ENCODE measurements at regions of chr3 and their contacts with region 1.

Region 1: GRCh38 chr3:112519424-112520001 is 20.2 kb upstream of the BTLA start:
- DNase-seq: peak in 1 of 2 donors; percentile 34
- H3K4me3 ChIP-seq: no peak overlapping the region
- H3K27ac ChIP-seq: no peak overlapping the region
- H3K4me1 ChIP-seq: no peaks in the 10 kb centered on the region
- H3K27me3 ChIP-seq: no peaks in the 10 kb centered on the region
- CTCF ChIP-seq: peak; percentile 61 to 86 (median 74)
- POLR2A ChIP-seq: no peak

Region 2: GRCh38 chr3:112327371-112327951 is 192.1 kb before region 1 on chr3:
- intact Hi-C with region 1: loop called (anchors 10 kb)
- DNase-seq: peak in 1 of 2 donors; percentile 51
- H3K4me3 ChIP-seq: no peak overlapping the region
- H3K27ac ChIP-seq: no peak overlapping the region
- H3K4me1 ChIP-seq: peaks cover 0 to 6% of the 10 kb centered on the region in 2 donors
- H3K27me3 ChIP-seq: no peaks in the 10 kb centered on the region
- CTCF ChIP-seq: peak; percentile 62 to 82 (median 76)
- POLR2A ChIP-seq: no peak